Natural killer cell (primary cell): ENCODE measurements at regions of chr22 and their contacts with region 1.

Region 1: GRCh38 chr22:25419237-25420113 is 145.0 kb upstream of the GRK3 start:
- DNase-seq: peak in 1 of 2 donors; percentile 29
- ATAC-seq: peak in 2 of 3 donors; percentile 36 to 67
- H3K4me3 ChIP-seq: no peak overlapping the region
- H3K4me3 Mint-ChIP-seq: peak overlapping the region; percentile 14
- H3K27ac ChIP-seq: no peak overlapping the region
- H3K27ac Mint-ChIP-seq: no peak overlapping the region
- H3K4me1 ChIP-seq: peaks cover 26% of the 10 kb centered on the region
- H3K4me1 Mint-ChIP-seq: peaks cover 15 to 22% of the 10 kb centered on the region in 2 donors
- H3K27me3 ChIP-seq: peaks cover 24% of the 10 kb centered on the region
- H3K27me3 Mint-ChIP-seq: peaks cover 54 to 93% of the 10 kb centered on the region in 2 donors
- CTCF ChIP-seq: no peak

Region 2: GRCh38 chr22:25375683-25376082 is 43.8 kb before region 1 on chr22:
- intact Hi-C with region 1: no loop called
- DNase-seq: no peak
- ATAC-seq: no peak
- H3K4me3 ChIP-seq: no peak overlapping the region
- H3K4me3 Mint-ChIP-seq: no peak overlapping the region
- H3K27ac ChIP-seq: no peak overlapping the region
- H3K27ac Mint-ChIP-seq: no peak overlapping the region
- H3K4me1 ChIP-seq: no peaks in the 10 kb centered on the region
- H3K4me1 Mint-ChIP-seq: peaks cover 13 to 19% of the 10 kb centered on the region in 2 donors
- H3K27me3 ChIP-seq: no peaks in the 10 kb centered on the region
- H3K27me3 Mint-ChIP-seq: no peaks in the 10 kb centered on the region
- CTCF ChIP-seq: no peak

Region 3: GRCh38 chr22:25403811-25404471 is 15.5 kb before region 1 on chr22:
- intact Hi-C with region 1: no loop called
- DNase-seq: peak in 1 of 2 donors; percentile 27
- ATAC-seq: no peak
- H3K4me3 ChIP-seq: peak overlapping the region; percentile 31
- H3K4me3 Mint-ChIP-seq: peak overlapping the region; percentile 87
- H3K27ac ChIP-seq: no peak overlapping the region
- H3K27ac Mint-ChIP-seq: peak overlapping the region; percentile 72 to 73
- H3K4me1 ChIP-seq: peaks cover 37% of the 10 kb centered on the region
- H3K4me1 Mint-ChIP-seq: peaks cover 30 to 34% of the 10 kb centered on the region in 2 donors
- H3K27me3 ChIP-seq: no peaks in the 10 kb centered on the region
- H3K27me3 Mint-ChIP-seq: no peaks in the 10 kb centered on the region
- CTCF ChIP-seq: no peak

Region 4: DNA sequence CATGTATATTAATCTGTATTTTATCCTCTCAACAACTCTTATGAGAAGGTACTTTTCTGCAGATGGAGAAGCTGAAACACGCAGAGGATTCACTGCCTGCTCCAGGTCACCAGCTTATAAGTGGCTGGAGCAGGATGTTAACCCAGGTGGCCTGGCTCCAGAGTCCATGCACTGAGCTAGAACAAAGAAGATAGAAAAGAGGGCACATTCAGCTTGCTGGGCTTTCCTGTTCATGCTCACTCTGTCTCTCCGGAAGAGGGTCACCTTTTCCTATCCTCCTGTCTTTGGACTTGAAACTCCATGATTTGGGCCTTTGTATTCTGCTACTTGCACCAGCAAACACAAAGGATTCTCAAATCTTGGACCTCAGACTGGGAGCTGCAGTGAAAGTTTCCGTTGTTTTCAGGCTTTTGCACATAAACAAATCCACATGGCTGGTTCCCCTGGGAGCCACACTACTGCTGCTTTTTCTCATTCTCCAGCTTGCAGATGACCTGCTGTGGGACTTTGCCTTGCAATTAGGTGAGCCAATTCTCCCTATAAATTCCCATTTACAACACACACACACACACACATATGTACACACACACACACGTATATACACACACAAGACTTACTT is 27.7 kb after region 1 on chr22:
- intact Hi-C with region 1: no loop called
- DNase-seq: peak in 1 of 2 donors; percentile 6
- ATAC-seq: no peak
- H3K4me3 ChIP-seq: no peak overlapping the region
- H3K4me3 Mint-ChIP-seq: peak overlapping the region; percentile 99
- H3K27ac ChIP-seq: no peak overlapping the region
- H3K27ac Mint-ChIP-seq: peak overlapping the region; percentile 93 to 94
- H3K4me1 ChIP-seq: peaks cover 8% of the 10 kb centered on the region
- H3K4me1 Mint-ChIP-seq: peaks cover 25 to 43% of the 10 kb centered on the region in 2 donors
- H3K27me3 ChIP-seq: no peaks in the 10 kb centered on the region
- H3K27me3 Mint-ChIP-seq: no peaks in the 10 kb centered on the region
- CTCF ChIP-seq: no peak

Region 5: GRCh38 chr22:25564320-25564978 is 145.0 kb after region 1 on chr22 and contains the start of gene GRK3:
- intact Hi-C with region 1: loop called (anchors 5 kb)
- DNase-seq: peak; percentile 17 to 66
- ATAC-seq: peak; percentile 54 to 79 (median 66)
- H3K4me3 ChIP-seq: peak within 1 kb of the TSS; percentile 54
- H3K4me3 Mint-ChIP-seq: peak within 1 kb of the TSS; percentile 91
- H3K27ac ChIP-seq: peak within 1 kb of the TSS; percentile 78
- H3K27ac Mint-ChIP-seq: peak within 1 kb of the TSS in 1 of 2 donors; percentile 74
- H3K4me1 ChIP-seq: peaks cover 16% of the 10 kb centered on the region
- H3K4me1 Mint-ChIP-seq: peaks cover 19 to 27% of the 10 kb centered on the region in 2 donors
- H3K27me3 ChIP-seq: no peaks in the 10 kb centered on the region
- H3K27me3 Mint-ChIP-seq: peaks cover 27 to 33% of the 10 kb centered on the region in 2 donors
- CTCF ChIP-seq: no peak
- total RNA-seq, gene GRK3: 2.2 to 7.2 (median 3.8) TPM